ENCODE measurements at regions of chr10 and their contacts with region 1.

Region 1: DNA sequence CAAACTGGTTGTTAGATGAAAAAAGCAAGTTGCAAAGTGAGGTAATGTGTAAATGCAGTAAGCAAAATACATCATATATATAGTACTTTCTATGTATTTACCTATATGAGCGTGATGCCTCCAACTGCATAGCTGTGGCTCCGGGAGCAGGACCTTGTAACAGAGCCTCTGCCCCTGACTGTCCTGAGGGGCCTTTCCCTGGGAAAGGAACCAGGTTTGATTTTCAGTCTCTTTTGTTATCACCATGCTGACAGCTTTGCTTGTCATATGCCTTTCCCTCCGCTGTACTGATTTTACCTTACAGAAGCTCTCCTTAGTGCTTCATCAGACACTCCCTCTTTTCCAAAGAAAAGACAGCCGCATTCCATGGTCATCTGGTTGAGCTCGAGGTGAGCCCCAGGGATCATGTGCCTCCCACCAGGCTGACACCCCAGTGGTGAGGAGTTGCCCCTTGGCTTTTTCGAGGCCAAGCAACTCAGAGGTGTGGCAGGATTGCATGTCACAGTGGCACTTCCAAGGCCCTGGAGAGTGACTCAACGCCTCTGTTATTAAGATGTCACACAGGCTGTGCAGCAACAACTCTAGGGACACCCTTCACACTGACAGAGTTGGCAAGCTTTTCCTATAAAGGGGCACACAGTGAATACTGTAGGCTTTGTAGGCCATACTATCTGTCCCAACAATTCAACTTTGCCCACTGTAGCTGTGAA is 78.9 kb downstream of the ALOX5 start:
- DNase-seq: no peak
- ATAC-seq: no peak
- H3K4me3 ChIP-seq: no peak overlapping the region
- H3K27ac ChIP-seq: no peak overlapping the region
- H3K4me1 ChIP-seq: peaks cover 10 to 12% of the 10 kb centered on the region in 2 donors
- H3K27me3 ChIP-seq: no peaks in the 10 kb centered on the region
- CTCF ChIP-seq: no peak
- POLR2A ChIP-seq: no peak

Region 2: GRCh38 chr10:45487738-45488137 is 34.8 kb after region 1 on chr10:
- in situ Hi-C with region 1: no loop called
- intact Hi-C with region 1: loop called (anchors 1 kb)
- DNase-seq: no peak
- ATAC-seq: no peak
- H3K4me3 ChIP-seq: no peak overlapping the region
- H3K27ac ChIP-seq: no peak overlapping the region
- H3K4me1 ChIP-seq: no peaks in the 10 kb centered on the region
- H3K27me3 ChIP-seq: no peaks in the 10 kb centered on the region
- CTCF ChIP-seq: no peak
- POLR2A ChIP-seq: no peak